Posterior vena cava (tissue), 2 donors: ENCODE measurements at regions of chr15 and their contacts with region 1.

Region 1: DNA sequence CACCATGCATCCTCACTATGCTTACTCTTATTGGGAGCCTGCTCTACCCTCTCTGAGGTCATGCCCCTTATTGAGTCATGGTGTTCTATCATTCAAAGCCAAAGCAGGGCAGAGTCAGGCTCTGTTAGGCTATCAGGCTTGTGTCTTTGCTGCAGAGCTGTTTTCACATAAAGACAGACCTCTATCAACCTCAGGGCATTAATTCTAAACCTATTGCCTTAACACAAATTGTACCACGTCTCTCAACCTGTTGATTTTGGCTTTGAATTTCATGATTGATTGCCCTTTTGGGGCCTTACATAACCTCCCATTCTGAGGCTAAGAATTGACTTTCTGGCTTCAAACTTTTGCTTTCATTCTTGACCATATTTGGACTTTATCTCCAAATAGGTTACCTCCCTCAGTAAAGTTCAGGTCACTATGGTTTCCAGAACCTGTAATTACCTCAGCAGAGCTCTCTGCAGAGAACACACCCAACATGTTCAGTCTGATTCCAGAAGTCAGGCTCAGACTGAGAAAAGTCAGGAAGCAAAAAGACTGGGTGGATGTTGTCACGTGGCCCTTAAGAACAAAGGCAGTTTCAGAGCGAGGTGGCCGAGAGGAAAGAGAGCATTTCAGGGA is 221.4 kb upstream of the NANOGP8 start:
- DNase-seq: no peak

Region 2: GRCh38 chr15:36579792-36580431 is 1273.4 kb after region 1 on chr15:
- intact Hi-C with region 1: loop called in 1 of 2 experiments (anchors 10 kb)
- DNase-seq: no peak